ENCODE measurements at regions of chr3 and their contacts with region 1.

Region 1: GRCh38 chr3:177050501-177051237 is 146.6 kb downstream of the TBL1XR1 start:
- DNase-seq: peak in 2 of 9 experiments; percentile 64 to 75
- ATAC-seq: peak; percentile 86
- H3K4me3 ChIP-seq: no peak overlapping the region
- H3K4me3 Mint-ChIP-seq: no peak overlapping the region
- H3K27ac ChIP-seq: no peak overlapping the region
- H3K27ac Mint-ChIP-seq: no peak overlapping the region
- H3K4me1 ChIP-seq: peaks cover 3% of the 10 kb centered on the region
- H3K4me1 Mint-ChIP-seq: peaks cover 20% of the 10 kb centered on the region
- H3K27me3 ChIP-seq: no peaks in the 10 kb centered on the region
- H3K27me3 Mint-ChIP-seq: no peaks in the 10 kb centered on the region
- CTCF ChIP-seq: peak; percentile 95

Region 2: DNA sequence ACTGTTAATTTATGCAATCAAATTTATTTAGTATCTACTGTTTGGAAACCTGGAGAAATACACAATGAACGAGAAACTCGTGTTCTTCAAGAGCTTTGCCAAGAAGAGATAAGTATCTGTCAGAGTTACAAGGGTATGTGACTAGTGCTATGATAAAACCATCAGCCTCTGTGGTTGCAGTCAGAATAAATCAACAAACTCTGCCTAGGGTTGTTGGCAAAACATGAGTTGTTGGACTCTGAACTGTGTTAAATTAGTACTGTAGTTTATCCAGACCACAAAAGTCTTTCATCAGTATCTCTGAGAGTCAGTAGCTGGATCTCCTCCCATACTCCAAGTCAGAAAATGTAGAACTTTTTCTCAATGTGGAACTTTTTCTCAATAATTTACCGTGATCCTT is 1273.2 kb before region 1 on chr3:
- CTCF ChIA-PET with region 1: no interaction called
- POLR2A ChIA-PET with region 1: no interaction called
- intact Hi-C with region 1: no loop called
- DNase-seq: no peak
- ATAC-seq: no peak
- H3K4me3 ChIP-seq: no peak overlapping the region
- H3K4me3 Mint-ChIP-seq: no peak overlapping the region
- H3K27ac ChIP-seq: no peak overlapping the region
- H3K27ac Mint-ChIP-seq: no peak overlapping the region
- H3K4me1 ChIP-seq: no peaks in the 10 kb centered on the region
- H3K4me1 Mint-ChIP-seq: no peaks in the 10 kb centered on the region
- H3K27me3 ChIP-seq: no peaks in the 10 kb centered on the region
- H3K27me3 Mint-ChIP-seq: no peaks in the 10 kb centered on the region
- CTCF ChIP-seq: no peak

Region 3: GRCh38 chr3:176872771-176873209 is 177.9 kb before region 1 on chr3:
- CTCF ChIA-PET with region 1: no interaction called
- POLR2A ChIA-PET with region 1: no interaction called
- intact Hi-C with region 1: loop called in 1 of 2 experiments (anchors 10 kb)
- DNase-seq: peak; percentile 11 to 70 (median 55)
- ATAC-seq: peak; percentile 82
- H3K4me3 ChIP-seq: no peak overlapping the region
- H3K4me3 Mint-ChIP-seq: no peak overlapping the region
- H3K27ac ChIP-seq: no peak overlapping the region
- H3K27ac Mint-ChIP-seq: no peak overlapping the region
- H3K4me1 ChIP-seq: no peaks in the 10 kb centered on the region
- H3K4me1 Mint-ChIP-seq: peaks cover 4% of the 10 kb centered on the region
- H3K27me3 ChIP-seq: no peaks in the 10 kb centered on the region
- H3K27me3 Mint-ChIP-seq: peaks cover 4% of the 10 kb centered on the region
- CTCF ChIP-seq: peak; percentile 66

Region 4: GRCh38 chr3:177013681-177014280 is 36.9 kb before region 1 on chr3:
- CTCF ChIA-PET with region 1: no interaction called
- POLR2A ChIA-PET with region 1: no interaction called
- intact Hi-C with region 1: no loop called
- DNase-seq: no peak
- ATAC-seq: no peak
- H3K4me3 ChIP-seq: no peak overlapping the region
- H3K4me3 Mint-ChIP-seq: no peak overlapping the region
- H3K27ac ChIP-seq: no peak overlapping the region
- H3K27ac Mint-ChIP-seq: no peak overlapping the region
- H3K4me1 ChIP-seq: no peaks in the 10 kb centered on the region
- H3K4me1 Mint-ChIP-seq: no peaks in the 10 kb centered on the region
- H3K27me3 ChIP-seq: no peaks in the 10 kb centered on the region
- H3K27me3 Mint-ChIP-seq: no peaks in the 10 kb centered on the region
- CTCF ChIP-seq: no peak

Region 5: GRCh38 chr3:177109688-177110330 is 59.1 kb after region 1 on chr3:
- CTCF ChIA-PET with region 1: no interaction called
- POLR2A ChIA-PET with region 1: no interaction called
- intact Hi-C with region 1: no loop called
- DNase-seq: peak in 2 of 9 experiments; percentile 30 to 63
- ATAC-seq: peak; percentile 95
- H3K4me3 ChIP-seq: no peak overlapping the region
- H3K4me3 Mint-ChIP-seq: peak overlapping the region; percentile 33
- H3K27ac ChIP-seq: peak overlapping the region; percentile 18 to 27
- H3K27ac Mint-ChIP-seq: peak overlapping the region; percentile 90
- H3K4me1 ChIP-seq: peaks cover 46% of the 10 kb centered on the region
- H3K4me1 Mint-ChIP-seq: peaks cover 76% of the 10 kb centered on the region
- H3K27me3 ChIP-seq: no peaks in the 10 kb centered on the region
- H3K27me3 Mint-ChIP-seq: no peaks in the 10 kb centered on the region
- CTCF ChIP-seq: no peak

Region 6: DNA sequence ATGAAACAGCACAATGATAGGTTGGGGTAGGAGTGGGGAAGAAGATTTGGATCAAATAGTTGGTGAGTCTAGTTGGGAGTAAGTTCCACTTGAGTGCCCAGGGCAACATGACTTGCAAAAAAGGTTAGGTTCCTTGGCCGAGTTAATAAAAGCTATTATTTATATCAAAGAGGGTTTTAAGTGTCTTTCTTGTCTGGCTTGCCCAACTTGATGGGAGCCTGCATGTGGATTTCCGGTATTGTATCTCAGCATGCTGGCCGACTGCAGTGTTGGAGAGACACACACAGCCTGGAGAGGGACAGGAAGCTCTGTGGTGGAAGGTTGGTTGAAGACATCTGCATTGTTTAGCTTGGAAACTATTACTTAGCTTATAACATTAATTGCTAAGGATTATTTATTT is 596.1 kb after region 1 on chr3:
- CTCF ChIA-PET with region 1: no interaction called
- POLR2A ChIA-PET with region 1: no interaction called
- intact Hi-C with region 1: loop called in 1 of 2 experiments (anchors 10 kb)
- DNase-seq: peak in 6 of 9 experiments; percentile 15 to 66 (median 47)
- ATAC-seq: peak; percentile 48
- H3K4me3 ChIP-seq: no peak overlapping the region
- H3K4me3 Mint-ChIP-seq: peak overlapping the region; percentile 42
- H3K27ac ChIP-seq: peak overlapping the region in 1 of 2 experiments; percentile 59
- H3K27ac Mint-ChIP-seq: peak overlapping the region; percentile 49
- H3K4me1 ChIP-seq: peaks cover 49% of the 10 kb centered on the region
- H3K4me1 Mint-ChIP-seq: peaks cover 68% of the 10 kb centered on the region
- H3K27me3 ChIP-seq: no peaks in the 10 kb centered on the region
- H3K27me3 Mint-ChIP-seq: no peaks in the 10 kb centered on the region
- CTCF ChIP-seq: no peak

Region 7: DNA sequence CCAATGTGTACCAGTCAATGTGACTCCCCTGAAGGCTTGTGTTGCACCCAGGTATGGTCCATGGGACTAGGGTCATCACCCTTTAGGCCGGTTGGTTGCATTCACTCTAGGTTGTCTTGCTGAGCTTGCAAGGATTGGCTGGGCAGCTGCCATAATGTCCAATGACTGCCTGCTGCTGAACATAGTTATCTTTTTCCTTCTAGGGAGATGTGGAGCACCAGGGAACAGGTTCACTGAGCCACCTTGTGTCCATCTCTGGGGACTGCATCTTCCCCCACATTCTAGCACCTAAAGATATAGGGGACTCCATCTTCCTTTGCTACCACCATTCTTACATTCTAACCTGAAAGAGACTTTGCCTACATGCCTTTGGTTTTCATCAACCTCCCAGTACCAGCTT is 727.0 kb after region 1 on chr3:
- CTCF ChIA-PET with region 1: interaction called, 9 read pairs
- POLR2A ChIA-PET with region 1: no interaction called
- intact Hi-C with region 1: loop called (anchors 1 to 10 kb)
- DNase-seq: peak in 5 of 9 experiments; percentile 13 to 53 (median 37)
- ATAC-seq: peak; percentile 44
- H3K4me3 ChIP-seq: no peak overlapping the region
- H3K4me3 Mint-ChIP-seq: no peak overlapping the region
- H3K27ac ChIP-seq: no peak overlapping the region
- H3K27ac Mint-ChIP-seq: no peak overlapping the region
- H3K4me1 ChIP-seq: peaks cover 16% of the 10 kb centered on the region
- H3K4me1 Mint-ChIP-seq: peaks cover 19% of the 10 kb centered on the region
- H3K27me3 ChIP-seq: no peaks in the 10 kb centered on the region
- H3K27me3 Mint-ChIP-seq: no peaks in the 10 kb centered on the region
- CTCF ChIP-seq: no peak

Region 8: GRCh38 chr3:178325330-178325729 is 1274.7 kb after region 1 on chr3:
- CTCF ChIA-PET with region 1: no interaction called
- POLR2A ChIA-PET with region 1: no interaction called
- intact Hi-C with region 1: loop called (anchors 2 kb)
- DNase-seq: peak in 1 of 9 experiments; percentile 6
- ATAC-seq: no peak
- H3K4me3 ChIP-seq: no peak overlapping the region
- H3K4me3 Mint-ChIP-seq: no peak overlapping the region
- H3K27ac ChIP-seq: no peak overlapping the region
- H3K27ac Mint-ChIP-seq: no peak overlapping the region
- H3K4me1 ChIP-seq: no peaks in the 10 kb centered on the region
- H3K4me1 Mint-ChIP-seq: no peaks in the 10 kb centered on the region
- H3K27me3 ChIP-seq: no peaks in the 10 kb centered on the region
- H3K27me3 Mint-ChIP-seq: no peaks in the 10 kb centered on the region
- CTCF ChIP-seq: peak; percentile 35

Measured in CD8-positive, alpha-beta T cell (primary cell).